ENCODE measurements at regions of chr2 and their contacts with region 1.

Region 1: DNA sequence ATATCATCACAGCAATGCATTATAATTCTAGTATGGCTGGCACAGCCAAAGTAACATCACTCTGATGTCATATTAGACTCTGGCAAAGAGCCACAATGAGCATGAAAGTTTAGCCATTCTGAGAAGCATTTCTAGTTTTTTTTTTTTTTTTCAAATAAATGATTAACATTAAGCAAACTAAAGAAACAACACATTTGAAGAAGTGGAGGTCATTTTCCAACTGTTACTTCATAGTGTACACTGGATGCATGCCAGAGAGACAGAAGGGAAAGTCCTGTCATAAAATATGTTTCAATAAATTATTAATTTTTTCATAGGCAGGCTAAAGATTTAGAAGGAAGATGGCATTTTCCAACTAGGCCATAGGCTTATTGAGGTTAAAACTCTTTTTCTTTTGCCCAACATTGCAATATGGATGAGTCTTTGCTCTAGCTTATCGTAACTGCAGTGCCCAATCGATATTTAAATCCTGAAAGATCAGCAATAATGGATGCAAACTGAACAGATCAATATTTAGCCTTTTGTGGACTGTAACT is 1630.4 kb upstream of the ACVR2A start:
- DNase-seq: no peak
- H3K4me3 ChIP-seq: no peak overlapping the region
- H3K27ac ChIP-seq: no peak overlapping the region
- H3K27me3 ChIP-seq: no peaks in the 10 kb centered on the region
- CTCF ChIP-seq: no peak

Region 2: DNA sequence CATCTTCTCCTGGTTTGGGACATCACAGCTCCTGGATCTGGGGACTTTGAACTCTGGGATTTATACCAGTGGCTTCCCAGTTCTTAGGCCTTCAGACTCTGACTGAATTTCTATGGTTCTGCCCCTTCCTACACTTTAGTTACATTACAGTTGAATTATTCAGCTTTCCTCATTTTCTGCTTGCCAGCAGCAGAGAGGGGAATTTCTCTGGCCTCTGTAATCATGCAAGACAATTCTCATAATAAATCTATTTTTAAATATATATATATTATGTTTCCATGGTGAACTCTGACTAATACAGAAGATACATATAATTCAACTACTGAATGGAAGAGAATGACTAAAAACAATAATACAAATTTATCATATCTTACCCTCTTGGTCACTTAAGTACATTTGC is 151.8 kb after region 1 on chr2:
- CTCF ChIA-PET with region 1: interaction called, 14 read pairs
- POLR2A ChIA-PET with region 1: no interaction called
- DNase-seq: no peak
- H3K4me3 ChIP-seq: no peak overlapping the region
- H3K27ac ChIP-seq: no peak overlapping the region
- H3K27me3 ChIP-seq: no peaks in the 10 kb centered on the region
- CTCF ChIP-seq: no peak

Measured in AG04450 (cell line).